ENCODE measurements at regions of chr6 and their contacts with region 1.

Region 1: DNA sequence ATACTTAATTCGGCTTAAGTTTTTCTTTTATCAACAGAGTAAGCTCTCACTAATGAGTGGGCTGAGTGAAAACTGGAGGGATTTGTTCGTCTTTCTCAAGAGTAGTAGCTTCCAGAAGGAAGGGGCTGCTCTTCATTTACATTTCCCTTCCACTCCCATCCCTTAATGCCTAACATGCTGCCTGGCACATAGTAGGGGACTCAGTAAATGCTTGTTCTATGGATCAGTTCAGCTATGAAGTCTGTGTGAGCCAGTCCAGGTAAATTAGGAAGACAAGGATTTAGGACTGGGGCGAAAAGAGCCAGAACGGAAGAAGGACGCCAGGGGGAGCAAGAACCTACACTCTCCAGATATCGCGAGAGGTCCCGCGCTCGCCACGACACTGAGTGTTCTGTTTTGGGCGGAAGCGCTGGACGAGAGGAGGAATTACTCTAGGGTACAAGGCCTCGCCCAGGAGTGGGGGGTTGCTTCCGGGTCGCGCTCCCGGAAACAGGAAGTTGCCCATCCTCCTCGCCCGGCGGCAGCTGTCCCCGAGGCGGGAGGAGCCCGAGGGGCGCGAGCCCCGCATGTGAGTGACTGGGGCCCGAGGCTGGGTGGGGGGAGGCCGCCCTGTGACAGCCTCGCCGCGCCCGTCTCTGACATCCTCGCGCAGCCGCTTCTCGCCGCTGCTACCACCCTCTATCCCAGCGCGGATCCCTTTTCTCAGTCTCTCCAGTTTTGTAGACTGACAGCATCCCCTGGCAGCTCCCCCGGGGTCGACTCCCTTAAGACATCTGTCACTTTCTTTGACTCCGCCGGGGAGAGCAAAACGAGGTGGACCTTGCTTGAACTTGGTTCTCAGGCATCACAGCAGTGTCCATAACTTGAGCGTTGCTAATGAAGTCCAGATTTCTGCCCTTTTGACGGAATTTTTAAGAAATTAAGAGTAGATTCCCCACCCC is at the start of gene C6orf89:
- DNase-seq: peak; percentile 75 to 96
- ATAC-seq: peak; percentile 100
- H3K4me3 ChIP-seq: peak within 1 kb of the TSS; percentile 81
- H3K27ac ChIP-seq: peak within 1 kb of the TSS; percentile 83 to 89
- H3K4me1 ChIP-seq: peaks cover 5% of the 10 kb centered on the region; the same call in 1 of the 3 replicates
- CTCF ChIP-seq: peak; percentile 64
- EP300 ChIP-seq: no peak
- POLR2A ChIP-seq: peak; percentile 63
- RAD21 ChIP-seq: peak; percentile 26 to 55
- polyA plus RNA-seq, gene C6orf89: 27.0 and 32.5 TPM in 2 replicates

Region 2: DNA sequence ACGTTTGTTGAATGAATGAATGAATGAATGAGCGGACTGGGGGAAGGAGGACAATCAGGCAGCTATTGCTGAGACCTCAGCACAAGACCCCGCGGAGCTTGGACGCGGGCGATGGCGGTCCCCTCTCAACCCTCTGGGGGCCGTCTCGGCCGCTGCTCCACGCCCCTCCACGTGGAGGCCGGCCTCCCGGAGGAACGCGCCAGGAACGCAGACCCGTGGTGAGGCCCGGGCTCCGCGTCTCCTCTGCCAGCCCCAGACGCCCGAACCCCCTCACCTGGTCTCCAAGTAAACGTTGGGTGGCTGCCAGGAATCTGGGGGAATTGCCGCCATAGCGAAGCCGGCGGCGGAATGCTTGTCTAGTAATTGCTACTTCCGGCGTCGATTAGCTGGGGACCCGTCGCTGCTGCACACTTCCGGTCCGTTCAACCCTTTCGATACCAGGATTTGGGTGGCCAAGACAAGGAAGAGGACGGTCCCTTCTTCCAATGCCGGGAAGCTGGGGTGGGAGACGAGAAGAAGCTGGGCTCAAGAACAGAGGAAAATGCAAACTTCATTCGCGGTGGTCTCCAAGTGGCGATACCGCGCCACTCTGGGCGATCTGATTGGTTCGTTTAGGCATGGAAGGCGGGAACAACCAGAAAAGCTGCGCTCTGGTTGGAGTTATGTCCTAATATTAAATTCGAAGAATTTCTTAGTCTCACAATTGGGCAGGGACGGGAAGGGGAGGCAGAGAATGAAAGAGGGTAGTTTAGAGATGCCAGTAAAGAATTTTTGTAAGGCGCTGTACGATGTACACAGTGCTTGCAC is 11.1 kb before region 1 on chr6 and contains the start of gene PPIL1:
- CTCF ChIA-PET with region 1: interaction called, 34 read pairs
- POLR2A ChIA-PET with region 1: interaction called, 12 read pairs
- DNase-seq: peak; percentile 88 to 91
- ATAC-seq: peak; percentile 97
- H3K4me3 ChIP-seq: peak within 1 kb of the TSS; percentile 65
- H3K27ac ChIP-seq: peak within 1 kb of the TSS; percentile 88 to 98
- H3K4me1 ChIP-seq: peaks cover 9% of the 10 kb centered on the region; the same call in 2 of the 3 replicates
- CTCF ChIP-seq: no peak
- EP300 ChIP-seq: no peak
- POLR2A ChIP-seq: peak; percentile 4; the same call in 1 of the 2 replicates
- RAD21 ChIP-seq: no peak
- polyA plus RNA-seq, gene PPIL1: 58.7 and 60.0 TPM in 2 replicates

Region 3: GRCh38 chr6:36904114-36904513 is 18.4 kb after region 1 on chr6:
- CTCF ChIA-PET with region 1: interaction called, 10 read pairs
- POLR2A ChIA-PET with region 1: no interaction called
- DNase-seq: no peak
- ATAC-seq: no peak
- H3K4me3 ChIP-seq: no peak overlapping the region
- H3K27ac ChIP-seq: no peak overlapping the region
- H3K4me1 ChIP-seq: no peaks in the 10 kb centered on the region
- CTCF ChIP-seq: no peak
- EP300 ChIP-seq: no peak
- POLR2A ChIP-seq: no peak
- RAD21 ChIP-seq: no peak

Region 4: GRCh38 chr6:36912586-36912985 is 26.9 kb after region 1 on chr6:
- CTCF ChIA-PET with region 1: interaction called, 14 read pairs
- POLR2A ChIA-PET with region 1: no interaction called
- DNase-seq: no peak
- ATAC-seq: no peak
- H3K4me3 ChIP-seq: no peak overlapping the region
- H3K27ac ChIP-seq: no peak overlapping the region
- H3K4me1 ChIP-seq: peaks cover 16% of the 10 kb centered on the region
- CTCF ChIP-seq: no peak
- EP300 ChIP-seq: no peak
- POLR2A ChIP-seq: no peak
- RAD21 ChIP-seq: no peak

Region 5: DNA sequence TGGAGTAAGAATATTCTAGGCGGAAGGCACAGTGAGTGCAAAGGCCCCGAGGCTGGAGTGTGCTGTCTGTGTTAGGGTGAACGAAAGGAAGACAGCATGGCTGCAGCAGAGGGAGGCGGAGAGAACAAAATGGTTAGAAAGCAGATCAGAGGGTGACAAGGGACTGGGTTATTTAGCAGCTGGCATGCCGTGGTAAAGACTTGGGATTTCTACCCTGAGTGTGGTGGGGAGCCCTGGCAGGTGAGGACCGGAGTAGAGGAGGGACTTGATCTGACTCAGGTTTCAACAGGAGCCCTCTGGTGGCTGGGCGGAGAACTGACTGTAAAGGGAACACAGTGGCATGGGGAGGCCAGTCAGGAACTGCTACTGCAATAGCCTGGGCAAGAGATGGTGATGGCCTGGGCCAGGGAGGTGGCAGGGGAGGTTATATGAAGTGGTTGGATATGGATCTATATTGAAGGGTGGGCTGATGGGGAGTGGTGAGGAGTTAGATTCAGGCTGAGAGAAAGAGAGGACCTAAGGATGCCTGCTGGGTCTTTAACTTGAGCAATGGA is 322.2 kb after region 1 on chr6:
- CTCF ChIA-PET with region 1: interaction called, 16 read pairs
- POLR2A ChIA-PET with region 1: no interaction called
- DNase-seq: peak; percentile 76 to 83
- ATAC-seq: peak; percentile 84 to 91
- H3K4me3 ChIP-seq: no peak overlapping the region
- H3K27ac ChIP-seq: no peak overlapping the region
- H3K4me1 ChIP-seq: peaks cover 29% of the 10 kb centered on the region
- CTCF ChIP-seq: peak; percentile 63
- EP300 ChIP-seq: no peak
- POLR2A ChIP-seq: no peak
- RAD21 ChIP-seq: peak; percentile 61 to 67